K562 (cell line): ENCODE measurements at regions of chr11 and their contacts with region 1.

Region 1: DNA sequence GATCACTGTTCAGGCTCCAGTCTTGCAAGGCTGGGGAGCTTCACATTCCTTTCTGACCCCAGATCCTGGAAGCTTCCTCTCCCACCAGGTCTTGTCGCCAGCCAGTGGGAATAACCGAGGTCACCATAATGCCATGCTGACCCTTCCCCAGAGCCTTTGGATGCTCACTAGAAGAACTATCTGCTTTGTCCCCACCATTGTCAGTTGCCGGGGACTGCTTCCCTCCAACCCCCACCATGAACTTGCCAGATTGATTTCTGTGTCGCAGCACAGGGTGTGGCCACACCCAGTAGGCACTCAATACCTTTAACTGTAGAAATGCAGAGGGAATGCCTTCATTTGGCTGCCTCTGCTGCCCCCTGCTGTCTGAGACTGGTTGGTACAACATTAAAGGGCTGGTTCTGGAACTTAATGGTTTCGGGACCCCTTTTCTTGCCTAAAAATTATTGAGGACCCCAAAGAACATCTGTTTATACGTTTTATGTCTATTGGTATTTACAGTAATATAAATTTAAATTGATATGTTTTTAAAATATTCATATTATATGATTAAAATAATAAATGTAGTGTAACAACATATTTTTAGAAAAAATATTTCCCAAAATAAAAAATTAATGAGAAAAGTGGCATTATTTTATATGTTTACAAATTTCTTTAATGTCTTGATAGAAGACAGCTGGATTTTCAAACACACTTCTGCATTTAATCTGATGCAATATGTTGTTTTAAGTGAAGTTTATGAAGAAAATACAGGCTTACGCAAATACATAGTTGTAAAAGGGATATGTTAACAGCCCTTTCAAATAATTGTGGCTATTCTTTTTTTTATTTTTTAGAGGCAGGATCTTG is 6.7 kb upstream of the GDPD5 start:
- DNase-seq: peak; percentile 69 to 91 (median 76)
- ATAC-seq: peak; percentile 42
- H3K4me3 ChIP-seq: no peak overlapping the region
- H3K27ac ChIP-seq: peak overlapping the region; percentile 96; the same call in 2 of the 3 replicates
- H3K4me1 ChIP-seq: peaks cover 41 to 49% of the 10 kb centered on the region in 2 experiments
- H3K27me3 ChIP-seq: no peaks in the 10 kb centered on the region
- CTCF ChIP-seq: peak; percentile 88 to 94 (median 89)
- EP300 ChIP-seq: no peak; the same call in 1 of the 2 replicates
- POLR2A ChIP-seq: no peak
- RAD21 ChIP-seq: peak; percentile 98

Region 2: DNA sequence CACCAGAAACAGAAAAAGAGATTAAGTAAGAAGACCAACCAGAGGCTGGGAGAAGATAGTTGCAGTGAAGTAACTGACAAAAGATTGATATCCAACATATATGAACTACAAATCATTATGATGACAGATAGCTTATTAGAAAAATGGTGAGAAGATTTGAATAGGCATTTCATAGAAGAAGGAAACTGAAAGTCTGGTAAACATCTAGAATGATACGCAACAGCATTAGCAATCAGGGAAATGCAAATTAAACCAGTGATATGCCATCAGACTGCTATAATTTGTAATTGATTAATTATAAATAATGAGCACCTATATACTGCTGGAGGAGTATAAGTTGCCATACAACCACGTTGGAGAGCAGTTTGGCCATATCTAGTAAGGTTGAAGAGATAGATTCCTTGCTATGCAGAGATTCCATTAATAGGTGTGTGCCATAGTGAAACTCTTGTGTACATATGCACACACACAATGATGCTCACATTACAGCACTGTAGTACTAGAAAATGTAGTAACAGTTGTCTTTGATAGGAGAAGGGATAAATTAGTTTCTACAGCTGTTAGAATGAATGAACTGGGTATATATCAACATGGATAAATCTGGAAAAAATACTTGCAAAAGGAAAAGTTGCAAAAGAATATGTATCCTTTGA is 763.2 kb before region 1 on chr11:
- CTCF ChIA-PET with region 1: no interaction called
- POLR2A ChIA-PET with region 1: no interaction called
- in situ Hi-C with region 1: no loop called
- intact Hi-C with region 1: no loop called
- DNase-seq: no peak
- ATAC-seq: no peak
- H3K4me3 ChIP-seq: no peak overlapping the region
- H3K27ac ChIP-seq: no peak overlapping the region
- H3K4me1 ChIP-seq: no peaks in the 10 kb centered on the region
- H3K27me3 ChIP-seq: no peaks in the 10 kb centered on the region
- CTCF ChIP-seq: no peak
- EP300 ChIP-seq: no peak
- POLR2A ChIP-seq: no peak
- RAD21 ChIP-seq: no peak

Region 3: GRCh38 chr11:75280227-75280701 is 252.2 kb before region 1 on chr11:
- CTCF ChIA-PET with region 1: interaction called, 12 read pairs
- POLR2A ChIA-PET with region 1: no interaction called
- in situ Hi-C with region 1: no loop called
- intact Hi-C with region 1: loop called (anchors 2 kb)
- DNase-seq: peak; percentile 80 to 85 (median 84)
- ATAC-seq: peak; percentile 97
- H3K4me3 ChIP-seq: no peak overlapping the region
- H3K27ac ChIP-seq: no peak overlapping the region
- H3K4me1 ChIP-seq: peaks cover 0 to 7% of the 10 kb centered on the region in 2 experiments; a peak in 1 of 5 replicates
- H3K27me3 ChIP-seq: no peaks in the 10 kb centered on the region
- CTCF ChIP-seq: peak; percentile 88 to 94 (median 90)
- EP300 ChIP-seq: no peak
- POLR2A ChIP-seq: no peak
- RAD21 ChIP-seq: peak; percentile 83 to 95

Region 4: DNA sequence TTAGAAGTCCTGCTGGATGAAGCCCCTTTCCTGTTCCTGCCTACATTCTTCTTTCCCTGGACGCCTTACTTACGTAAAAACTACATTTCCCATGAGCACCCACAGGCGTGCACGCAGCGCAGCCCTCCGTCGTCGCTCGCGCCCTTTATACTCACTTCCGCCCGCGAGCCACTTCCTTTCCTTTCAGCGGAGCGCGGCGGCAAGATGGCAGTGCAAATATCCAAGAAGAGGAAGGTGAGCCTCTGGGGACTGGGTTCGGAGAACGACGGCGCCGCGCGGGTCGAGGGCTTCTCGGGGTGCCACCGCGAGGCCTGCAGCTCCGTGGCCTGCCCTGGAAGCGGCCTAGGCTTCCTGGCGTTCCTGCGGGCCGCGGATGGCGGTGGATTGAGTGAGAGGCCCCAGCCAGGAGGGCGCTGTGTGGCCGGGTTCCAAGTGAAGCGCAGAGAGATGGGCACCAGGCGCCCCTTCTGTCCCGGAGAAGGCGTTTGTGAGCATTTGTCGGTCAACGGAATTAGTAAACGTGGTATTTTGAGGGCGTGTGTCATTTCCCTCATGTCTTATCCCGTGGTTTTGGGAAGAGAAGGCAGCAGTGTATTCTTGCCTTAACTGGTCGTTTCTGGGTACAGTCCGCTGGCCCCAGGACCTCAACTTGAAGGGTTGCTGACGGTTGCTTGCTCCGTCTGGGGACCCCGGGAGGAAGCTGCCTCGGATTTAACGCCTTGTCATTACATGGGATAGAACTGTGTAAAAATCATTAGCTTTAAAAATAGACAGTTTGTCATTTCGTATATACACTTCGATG is 132.9 kb before region 1 on chr11 and contains the start of gene RPS3:
- CTCF ChIA-PET with region 1: no interaction called
- POLR2A ChIA-PET with region 1: interaction called, 22 read pairs
- in situ Hi-C with region 1: no loop called
- intact Hi-C with region 1: no loop called
- DNase-seq: peak; percentile 83 to 95 (median 88)
- ATAC-seq: peak; percentile 91
- H3K4me3 ChIP-seq: peak within 1 kb of the TSS; percentile 91
- H3K27ac ChIP-seq: peak within 1 kb of the TSS; percentile 96
- H3K4me1 ChIP-seq: peaks cover 14 to 31% of the 10 kb centered on the region in 2 experiments; a peak in 3 of 5 replicates
- H3K27me3 ChIP-seq: no peaks in the 10 kb centered on the region
- CTCF ChIP-seq: no peak
- EP300 ChIP-seq: no peak
- POLR2A ChIP-seq: peak; percentile 99
- RAD21 ChIP-seq: no peak
- polyA plus RNA-seq, gene RPS3: 5,693 to 5,771 TPM

Region 5: DNA sequence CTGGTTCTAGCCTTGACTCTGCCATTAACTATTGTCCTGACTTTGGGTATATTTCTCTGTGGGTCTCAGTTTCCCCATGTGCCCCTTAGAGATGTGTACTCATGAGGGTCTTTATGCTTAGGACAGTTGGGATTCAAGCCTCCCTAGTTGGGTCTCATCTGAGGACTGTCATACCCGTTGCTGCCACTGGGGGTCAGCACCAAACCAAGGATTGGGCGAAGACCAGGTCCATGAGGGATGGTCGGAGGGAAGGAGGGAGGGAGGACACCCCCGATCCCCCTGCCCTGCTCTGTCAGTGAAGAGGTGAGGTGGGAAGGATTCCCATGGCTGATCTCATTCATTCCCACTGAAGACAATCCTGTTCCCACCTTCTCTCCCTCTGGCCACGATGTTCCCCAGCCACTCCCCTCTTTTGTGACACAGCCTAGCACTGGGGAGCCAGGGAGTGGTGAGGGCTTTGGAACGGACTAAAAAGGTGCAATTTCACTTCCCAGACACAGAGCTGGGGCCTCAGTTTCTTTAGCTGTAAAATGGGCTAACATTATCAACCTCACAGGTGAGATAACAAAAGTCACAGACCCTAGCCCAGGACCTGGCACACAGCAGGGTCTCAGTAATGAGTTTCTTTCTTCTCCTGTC is 87.0 kb before region 1 on chr11:
- CTCF ChIA-PET with region 1: interaction called, 58 read pairs
- POLR2A ChIA-PET with region 1: interaction called, 8 read pairs
- in situ Hi-C with region 1: loop called (anchors 5 kb)
- intact Hi-C with region 1: loop called (anchors 1 kb)
- DNase-seq: peak; percentile 80 to 86 (median 84)
- ATAC-seq: peak; percentile 93
- H3K4me3 ChIP-seq: no peak overlapping the region
- H3K27ac ChIP-seq: no peak overlapping the region
- H3K4me1 ChIP-seq: peaks cover 0 to 17% of the 10 kb centered on the region in 2 experiments; a peak in 1 of 5 replicates
- H3K27me3 ChIP-seq: no peaks in the 10 kb centered on the region
- CTCF ChIP-seq: peak; percentile 91 to 99 (median 95)
- EP300 ChIP-seq: no peak
- POLR2A ChIP-seq: no peak
- RAD21 ChIP-seq: peak; percentile 98 to 99

Region 6: DNA sequence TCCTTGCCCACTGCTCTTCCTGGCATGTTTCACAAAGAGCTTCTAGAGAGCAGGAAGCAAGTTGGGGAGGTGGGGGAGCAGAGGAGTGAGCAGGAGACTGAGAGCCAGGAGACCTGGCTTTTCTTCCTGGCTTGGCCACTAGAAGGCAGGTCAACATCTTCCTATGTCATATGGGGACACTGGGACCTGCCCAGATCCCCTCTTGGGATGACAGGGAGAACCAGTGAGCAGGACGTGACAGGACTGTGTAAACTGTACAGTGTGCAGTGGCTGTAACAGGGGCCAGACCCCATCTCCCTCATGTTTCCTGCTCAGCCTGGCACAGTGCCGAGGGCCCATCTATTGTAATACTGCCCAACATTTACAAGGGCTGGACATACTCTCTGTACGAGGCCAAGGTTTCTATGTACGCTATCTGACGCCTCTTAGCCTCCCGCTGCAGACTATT is 36.1 kb before region 1 on chr11:
- CTCF ChIA-PET with region 1: interaction called, 6 read pairs
- POLR2A ChIA-PET with region 1: no interaction called
- in situ Hi-C with region 1: no loop called
- intact Hi-C with region 1: loop called (anchors 1 kb)
- DNase-seq: peak in 2 of 4 experiments; percentile 38 to 44
- ATAC-seq: peak; percentile 77
- H3K4me3 ChIP-seq: no peak overlapping the region
- H3K27ac ChIP-seq: no peak overlapping the region
- H3K4me1 ChIP-seq: peaks cover 12 to 19% of the 10 kb centered on the region in 2 experiments
- H3K27me3 ChIP-seq: no peaks in the 10 kb centered on the region
- CTCF ChIP-seq: peak; percentile 42 to 56 (median 44); a peak in 5 of 6 replicates
- EP300 ChIP-seq: no peak
- POLR2A ChIP-seq: no peak
- RAD21 ChIP-seq: peak; percentile 31 to 67; a peak in 3 of 4 replicates

Region 7: GRCh38 chr11:75554258-75555022 is 22.0 kb after region 1 on chr11:
- CTCF ChIA-PET with region 1: no interaction called
- POLR2A ChIA-PET with region 1: interaction called, 14 read pairs
- in situ Hi-C with region 1: no loop called
- intact Hi-C with region 1: no loop called
- DNase-seq: peak; percentile 74 to 81 (median 76)
- ATAC-seq: peak; percentile 90
- H3K4me3 ChIP-seq: no peak overlapping the region
- H3K27ac ChIP-seq: peak overlapping the region; percentile 68
- H3K4me1 ChIP-seq: peaks cover 39 to 42% of the 10 kb centered on the region in 2 experiments
- H3K27me3 ChIP-seq: no peaks in the 10 kb centered on the region
- CTCF ChIP-seq: no peak
- EP300 ChIP-seq: no peak; the same call in 1 of the 2 replicates
- POLR2A ChIP-seq: 0 out of 2 replicates have a peak, but pooled peaks have one; percentile 25
- RAD21 ChIP-seq: no peak